RWPE1 (cell line): ENCODE measurements at regions of chr1 and their contacts with region 1.

Region 1: DNA sequence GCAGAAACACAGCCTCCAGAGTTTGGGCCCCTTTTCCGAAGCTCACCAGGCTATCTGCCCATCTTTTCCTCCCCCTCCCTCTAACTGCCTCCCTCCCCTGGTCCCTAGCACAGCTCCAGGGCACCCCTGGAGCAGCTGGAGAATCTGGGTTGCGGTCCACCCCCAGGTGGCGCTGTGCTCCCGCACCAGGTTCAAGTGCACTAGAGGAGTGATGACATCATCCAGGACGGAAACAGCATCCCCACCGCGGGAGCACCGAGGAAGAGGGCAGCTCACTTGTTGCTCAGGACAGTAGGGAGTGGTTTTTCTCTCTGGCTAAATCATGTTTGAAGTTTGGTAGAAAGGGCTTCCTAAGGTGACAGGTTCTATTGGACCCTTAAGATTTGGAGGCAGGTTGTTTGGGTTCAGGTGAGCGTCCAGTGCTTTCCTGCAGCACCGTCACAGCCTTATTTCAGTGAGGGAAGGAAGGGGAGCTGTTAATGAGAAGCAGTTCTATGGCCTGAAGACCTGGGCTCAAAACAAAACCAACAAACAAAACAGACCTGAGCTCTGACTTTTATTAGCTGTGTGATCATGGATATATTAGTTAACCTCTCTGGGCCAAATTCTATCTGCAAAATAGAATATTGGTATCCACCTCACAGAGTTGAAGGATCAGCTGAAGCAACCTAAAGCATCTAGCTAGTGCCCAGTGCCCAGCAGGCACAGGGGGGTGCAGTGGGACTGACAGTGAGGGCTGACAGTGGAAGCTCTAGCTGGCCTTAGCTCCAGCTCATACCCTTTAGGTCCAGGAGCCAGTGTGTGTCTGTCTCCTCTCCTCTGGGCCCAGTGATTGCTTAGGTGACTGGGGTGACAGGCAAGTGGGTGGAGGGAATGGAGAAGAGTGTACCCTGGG is 7.5 kb downstream of the SHISA4 start:
- DNase-seq: peak; percentile 95
- H3K27ac ChIP-seq: no peak overlapping the region
- CTCF ChIP-seq: peak; percentile 93

Region 2: DNA sequence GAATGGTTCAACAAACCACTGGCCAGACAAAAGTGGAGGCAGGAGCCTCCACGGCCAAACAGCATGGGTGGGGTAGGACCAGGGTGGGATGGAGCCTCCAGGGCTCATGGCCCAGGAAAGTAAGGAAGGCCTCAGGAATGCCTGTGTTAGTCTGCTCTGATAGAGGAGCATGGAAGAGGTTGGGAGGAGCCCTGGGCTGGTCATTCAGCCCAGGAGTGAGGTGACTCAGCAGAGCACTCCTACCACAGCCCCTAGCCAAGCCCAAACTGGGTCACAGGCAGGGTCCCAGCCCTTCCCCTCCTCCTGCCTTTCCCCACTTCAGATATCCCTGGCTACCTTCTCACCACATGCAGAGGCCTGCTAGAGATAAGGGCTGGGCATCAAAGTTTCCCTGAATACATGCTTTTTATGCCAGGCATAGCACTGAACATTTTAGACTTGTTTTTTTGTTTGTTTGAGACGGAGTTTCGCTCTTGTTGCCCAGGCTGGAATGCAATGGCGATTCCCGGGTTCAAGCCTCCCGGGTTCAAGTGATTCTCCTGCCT is 10.6 kb before region 1 on chr1:
- CTCF ChIA-PET with region 1: interaction called, 52 read pairs
- POLR2A ChIA-PET with region 1: no interaction called
- DNase-seq: peak; percentile 87
- H3K27ac ChIP-seq: peak overlapping the region; percentile 78
- CTCF ChIP-seq: no peak

Region 3: GRCh38 chr1:201946224-201946908 is 50.2 kb after region 1 on chr1 and contains the start of gene LMOD1:
- CTCF ChIA-PET with region 1: interaction called, 21 read pairs
- POLR2A ChIA-PET with region 1: no interaction called
- DNase-seq: no peak
- H3K27ac ChIP-seq: no peak within 1 kb of the TSS
- CTCF ChIP-seq: no peak

Region 4: DNA sequence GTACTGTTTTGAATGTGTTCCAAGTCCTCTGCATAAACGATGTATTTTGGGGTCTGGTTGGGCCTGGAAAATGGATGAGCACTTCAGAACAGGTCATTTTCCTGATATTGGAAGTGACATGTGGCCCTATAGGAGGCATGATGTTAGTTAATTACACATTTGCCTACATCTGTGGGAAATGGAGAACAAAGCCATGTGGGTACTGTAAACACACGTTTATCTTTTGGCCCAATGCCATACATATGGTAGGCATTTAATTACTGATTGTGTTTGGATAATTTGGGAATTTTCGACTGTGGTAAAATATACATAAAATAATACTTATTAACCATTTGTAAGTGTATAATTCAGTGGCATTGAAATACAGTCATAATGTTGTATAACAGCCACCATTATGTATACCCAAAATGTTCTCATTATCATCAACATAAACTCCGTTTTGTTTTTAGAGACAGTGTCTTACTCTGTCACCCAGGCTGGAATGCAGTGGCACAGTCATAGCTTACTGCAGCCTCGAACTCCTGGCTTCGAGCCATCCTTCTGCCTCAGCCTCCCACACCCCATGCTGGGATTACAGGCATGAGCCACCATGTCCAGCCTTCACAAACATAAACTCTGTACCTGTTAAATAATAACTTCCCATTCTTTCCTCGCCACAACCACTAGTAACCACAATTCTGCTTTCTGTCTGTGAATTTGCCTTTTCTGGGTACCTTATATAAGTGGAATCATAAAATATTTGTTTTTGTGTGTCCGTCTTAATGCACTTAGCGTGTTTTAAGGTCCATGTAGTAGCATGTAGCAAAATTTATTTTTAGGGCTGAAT is 74.4 kb after region 1 on chr1:
- CTCF ChIA-PET with region 1: interaction called, 162 read pairs
- POLR2A ChIA-PET with region 1: interaction called, 6 read pairs
- DNase-seq: no peak
- H3K27ac ChIP-seq: no peak overlapping the region
- CTCF ChIP-seq: no peak

Region 5: GRCh38 chr1:202009326-202010179 is 113.4 kb after region 1 on chr1:
- CTCF ChIA-PET with region 1: interaction called, 12 read pairs
- POLR2A ChIA-PET with region 1: no interaction called
- DNase-seq: peak; percentile 95
- H3K27ac ChIP-seq: no peak overlapping the region
- CTCF ChIP-seq: peak; percentile 84

Region 6: GRCh38 chr1:202034683-202035462 is 138.7 kb after region 1 on chr1:
- CTCF ChIA-PET with region 1: no interaction called
- POLR2A ChIA-PET with region 1: no interaction called
- DNase-seq: peak; percentile 95
- H3K27ac ChIP-seq: peak overlapping the region; percentile 68
- CTCF ChIP-seq: no peak

Region 7: DNA sequence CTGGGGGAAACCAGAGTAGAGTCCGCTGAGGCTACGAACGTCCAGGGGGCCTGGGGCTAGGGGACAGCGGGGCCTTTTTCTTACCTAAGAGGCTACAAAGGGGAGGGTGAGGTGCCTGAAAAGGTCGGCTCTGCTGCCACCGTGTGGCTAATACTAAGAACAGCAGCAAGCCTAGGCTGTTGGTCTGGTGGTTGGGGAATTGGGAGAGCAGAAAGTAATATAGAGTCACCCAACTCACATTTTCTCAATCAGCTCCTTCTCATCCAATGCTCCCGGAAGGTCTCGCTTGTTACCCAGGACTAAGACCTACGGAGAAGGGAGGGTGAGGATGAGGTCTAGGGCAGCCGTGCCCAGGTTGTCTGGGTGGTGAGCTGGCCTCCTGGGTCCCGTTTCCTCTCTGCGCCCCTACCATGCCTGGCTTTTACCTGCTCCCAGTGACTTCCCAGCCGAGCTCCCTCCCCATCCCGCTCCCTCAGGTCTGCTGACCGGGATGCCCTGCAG is 239.1 kb after region 1 on chr1:
- CTCF ChIA-PET with region 1: interaction called, 15 read pairs
- POLR2A ChIA-PET with region 1: no interaction called
- DNase-seq: peak; percentile 94
- H3K27ac ChIP-seq: peak overlapping the region; percentile 85
- CTCF ChIP-seq: peak; percentile 86